Heart left ventricle (tissue), 16 donors: ENCODE measurements at regions of chr9 and their contacts with region 1.

Region 1: GRCh38 chr9:35603987-35604577 is 980 bp upstream of the TESK1 start:
- DNase-seq: peak; percentile 100
- ATAC-seq: peak; percentile 95 to 97 (median 96)
- H3K4me3 ChIP-seq: peak overlapping the region; percentile 43 to 96 (median 78)
- H3K27ac ChIP-seq: peak overlapping the region; percentile 62 to 99 (median 93)
- H3K4me1 ChIP-seq: peaks cover 6 to 33% (median 25%) of the 10 kb centered on the region in 12 donors
- H3K27me3 ChIP-seq: no peaks in the 10 kb centered on the region
- CTCF ChIP-seq: peak; percentile 90 to 99 (median 94)
- POLR2A ChIP-seq: peak in 1 of 2 donors; percentile 72

Region 2: DNA sequence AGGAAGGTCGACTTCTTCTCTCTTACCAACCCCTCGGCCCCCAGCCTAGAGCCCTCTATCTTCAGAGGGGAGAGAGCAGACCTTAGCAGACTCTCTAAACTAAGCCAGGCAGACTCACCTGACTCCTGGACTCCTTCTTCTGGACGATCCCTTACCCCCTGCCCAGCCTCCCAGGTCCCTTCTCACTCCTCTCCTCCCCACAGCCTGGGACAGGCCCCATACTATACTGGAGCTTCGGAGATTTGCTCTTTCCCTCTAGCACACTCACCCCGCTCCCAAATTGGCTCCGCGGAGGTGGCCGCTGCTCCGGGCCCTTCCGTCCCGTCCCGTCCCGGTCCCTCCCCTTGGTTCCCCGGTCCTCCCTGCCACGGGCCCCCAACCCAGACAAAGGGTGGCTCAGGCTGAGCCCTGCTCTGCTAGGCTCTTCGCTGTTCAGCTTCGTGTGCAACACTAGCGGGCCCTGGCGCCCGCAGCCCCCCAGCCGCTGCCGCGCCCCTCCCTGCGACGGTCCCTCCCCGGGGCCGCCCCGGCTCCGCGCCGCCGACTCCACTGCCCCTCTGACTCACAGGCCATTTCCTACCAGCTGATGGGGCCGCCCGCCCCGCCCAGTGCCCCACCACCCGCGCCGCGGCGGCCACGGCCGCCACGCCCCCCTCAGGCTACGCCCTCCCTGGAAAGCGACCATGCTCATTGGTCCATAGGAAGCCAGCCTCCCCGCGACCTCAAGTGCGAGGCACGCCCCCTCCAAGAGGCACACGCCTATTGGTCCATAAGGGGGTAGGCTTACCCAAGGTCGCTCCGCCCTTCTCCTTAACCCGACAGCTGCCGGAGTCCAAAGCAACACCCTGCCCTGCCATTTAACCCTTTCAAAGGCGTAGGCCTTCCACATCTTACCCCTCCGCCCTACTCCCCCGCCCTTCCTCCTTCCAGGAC is 492.8 kb before region 1 on chr9:
- intact Hi-C with region 1: loop called in 2 of 10 experiments (anchors 5 kb)
- DNase-seq: peak; percentile 98 to 99 (median 99)
- ATAC-seq: peak; percentile 75 to 87 (median 80)
- H3K4me3 ChIP-seq: peak overlapping the region; percentile 62 to 96 (median 88)
- H3K27ac ChIP-seq: peak overlapping the region; percentile 62 to 98 (median 92)
- H3K4me1 ChIP-seq: peaks cover 3 to 56% (median 46%) of the 10 kb centered on the region in 12 donors
- H3K27me3 ChIP-seq: no peaks in the 10 kb centered on the region
- CTCF ChIP-seq: no peak
- POLR2A ChIP-seq: peak; percentile 39 to 87

Region 3: DNA sequence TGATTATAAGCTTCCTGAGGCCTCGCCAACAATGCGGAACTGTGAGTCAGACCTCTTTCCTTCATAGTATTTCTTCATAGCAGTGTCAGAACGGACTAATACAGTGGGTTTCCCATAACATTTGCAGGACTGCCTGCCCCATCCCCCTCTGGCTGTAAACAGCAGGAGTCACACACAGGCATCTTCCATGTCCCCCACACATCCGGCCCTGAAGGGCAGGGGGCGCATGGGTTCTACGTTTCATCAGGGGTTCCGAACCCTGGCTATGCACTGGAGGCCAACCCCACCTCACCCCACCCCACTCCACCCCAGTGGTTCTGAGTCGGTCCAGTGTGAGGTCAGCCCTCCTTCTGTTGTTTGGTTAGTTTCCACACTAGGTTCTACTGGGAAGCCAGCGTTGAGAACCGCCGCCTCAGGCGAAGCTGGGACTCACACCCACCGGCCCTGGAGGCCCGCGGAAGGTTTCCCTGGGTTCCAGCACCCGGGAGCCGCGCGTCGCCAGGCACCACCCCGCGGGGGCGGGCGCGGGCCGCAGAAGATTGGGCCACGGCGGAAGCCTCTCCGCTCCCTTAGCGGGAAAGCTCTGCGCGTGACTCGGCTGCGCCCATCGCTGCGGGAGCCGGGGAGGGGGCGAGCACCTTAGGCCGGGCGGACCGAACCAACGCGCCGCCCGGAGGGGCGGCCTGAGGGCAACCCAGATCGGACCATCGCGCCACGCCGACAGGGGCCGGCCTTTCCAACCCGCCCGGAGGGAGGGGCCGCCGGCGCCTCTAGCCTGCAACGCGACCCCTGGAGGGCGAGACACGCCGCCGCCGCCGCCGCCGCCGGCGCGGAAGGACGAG is 114.5 kb before region 1 on chr9 and contains the start of gene RUSC2:
- intact Hi-C with region 1: loop called in 2 of 10 experiments (anchors 2 to 5 kb)
- DNase-seq: peak; percentile 87 to 92 (median 91)
- ATAC-seq: peak; percentile 78 to 90 (median 87)
- H3K4me3 ChIP-seq: peak within 1 kb of the TSS; percentile 53 to 97 (median 86)
- H3K27ac ChIP-seq: peak within 1 kb of the TSS; percentile 87 to 98 (median 96)
- H3K4me1 ChIP-seq: peaks cover 5 to 40% (median 31%) of the 10 kb centered on the region in 12 donors
- H3K27me3 ChIP-seq: no peaks in the 10 kb centered on the region
- CTCF ChIP-seq: peak; percentile 17 to 64 (median 46)
- POLR2A ChIP-seq: peak in 1 of 2 donors; percentile 79
- total RNA-seq, gene RUSC2: 23.0 to 56.1 (median 30.5) TPM

Region 4: DNA sequence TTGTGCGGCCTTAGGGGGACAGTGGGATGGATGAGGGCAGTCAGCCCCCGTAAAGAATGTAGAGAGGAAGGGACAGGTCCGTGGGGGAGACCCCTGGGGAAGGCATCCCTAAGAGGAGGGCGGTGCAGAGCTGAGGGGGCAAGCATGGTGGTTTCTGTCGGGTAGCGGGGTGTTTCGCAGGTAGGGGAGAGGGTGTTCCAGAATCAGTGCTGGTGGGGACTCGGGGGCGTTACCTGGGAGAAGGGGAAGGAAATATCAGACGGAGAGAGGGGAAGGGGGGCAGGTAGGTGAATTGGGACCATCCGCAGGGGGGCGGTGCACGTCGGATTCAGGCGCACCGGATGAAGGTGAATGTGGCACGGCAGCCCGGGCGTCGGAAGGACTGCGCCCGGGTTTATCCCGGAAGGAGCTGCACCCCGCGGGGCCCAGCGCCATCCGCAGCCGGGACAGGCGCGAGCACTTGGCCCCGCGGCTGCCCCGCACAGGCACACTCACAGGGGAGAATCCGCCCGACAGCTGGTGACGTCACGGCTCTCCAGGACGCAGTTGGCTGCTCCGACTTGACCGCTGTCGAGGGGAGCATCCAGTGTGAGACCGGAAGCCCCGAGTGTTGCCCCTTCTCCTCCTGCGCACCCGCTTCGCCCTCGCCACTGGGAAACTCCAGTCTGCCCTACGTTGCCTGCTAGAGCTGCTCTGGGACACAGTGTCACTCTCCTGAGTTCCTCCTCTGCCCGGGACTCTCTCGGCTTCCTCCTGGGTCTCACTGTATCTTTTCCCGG is 12.8 kb after region 1 on chr9:
- intact Hi-C with region 1: no loop called
- DNase-seq: peak; percentile 72 to 87 (median 78)
- ATAC-seq: peak; percentile 50 to 78 (median 64)
- H3K4me3 ChIP-seq: peak overlapping the region; percentile 25 to 62 (median 45)
- H3K27ac ChIP-seq: peak overlapping the region in 1 of 12 donors; percentile 54
- H3K4me1 ChIP-seq: peaks cover 0 to 37% (median 4%) of the 10 kb centered on the region in 12 donors
- H3K27me3 ChIP-seq: peaks cover 0 to 18% (median 0%) of the 10 kb centered on the region in 9 donors
- CTCF ChIP-seq: peak in 1 of 12 donors; percentile 15
- POLR2A ChIP-seq: no peak

Region 5: DNA sequence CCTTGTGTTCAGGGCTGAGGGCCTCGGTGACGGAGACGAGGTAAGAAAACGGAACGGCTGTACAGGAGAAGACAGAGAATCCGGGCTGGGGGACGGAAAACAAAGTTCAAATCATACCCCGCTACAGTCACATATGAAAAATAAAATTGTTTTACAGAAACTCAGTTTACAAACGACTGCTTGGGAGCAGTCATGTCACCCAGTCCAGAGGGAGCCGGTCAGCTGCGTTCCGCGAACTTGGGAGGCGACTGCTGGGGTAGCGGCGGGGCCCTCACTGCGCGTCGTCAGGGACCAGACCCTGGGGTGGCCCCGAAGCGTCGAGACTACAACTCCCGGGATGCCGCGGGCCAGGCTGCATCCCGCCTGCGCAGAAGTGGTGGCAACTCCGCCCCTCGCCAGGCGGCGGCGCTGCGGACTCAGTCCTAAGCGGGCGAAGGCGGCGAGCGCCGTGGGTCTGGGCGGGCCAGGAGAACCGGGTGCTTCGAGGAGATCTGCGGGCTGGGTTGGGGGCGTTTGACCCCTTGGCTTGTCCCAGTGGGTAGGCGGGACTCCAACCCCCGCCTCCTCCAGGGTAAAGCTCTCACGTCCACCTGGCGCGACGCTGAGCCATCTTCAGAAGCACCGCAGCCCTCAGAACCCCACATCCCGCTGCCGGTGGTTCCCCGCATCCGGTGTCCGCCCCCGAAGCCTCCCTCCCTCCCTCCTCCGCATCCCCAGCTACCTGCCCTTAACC is 42.6 kb after region 1 on chr9:
- intact Hi-C with region 1: loop called in 5 of 10 experiments (anchors 1 to 10 kb)
- DNase-seq: peak; percentile 93 to 97 (median 93)
- ATAC-seq: peak; percentile 83 to 97 (median 96)
- H3K4me3 ChIP-seq: peak overlapping the region; percentile 41 to 77 (median 64)
- H3K27ac ChIP-seq: peak overlapping the region; percentile 54 to 89 (median 81)
- H3K4me1 ChIP-seq: peaks cover 0 to 63% (median 9%) of the 10 kb centered on the region in 12 donors
- H3K27me3 ChIP-seq: no peaks in the 10 kb centered on the region
- CTCF ChIP-seq: peak; percentile 92 to 99 (median 96)
- POLR2A ChIP-seq: peak in 1 of 2 donors; percentile 85

Region 6: DNA sequence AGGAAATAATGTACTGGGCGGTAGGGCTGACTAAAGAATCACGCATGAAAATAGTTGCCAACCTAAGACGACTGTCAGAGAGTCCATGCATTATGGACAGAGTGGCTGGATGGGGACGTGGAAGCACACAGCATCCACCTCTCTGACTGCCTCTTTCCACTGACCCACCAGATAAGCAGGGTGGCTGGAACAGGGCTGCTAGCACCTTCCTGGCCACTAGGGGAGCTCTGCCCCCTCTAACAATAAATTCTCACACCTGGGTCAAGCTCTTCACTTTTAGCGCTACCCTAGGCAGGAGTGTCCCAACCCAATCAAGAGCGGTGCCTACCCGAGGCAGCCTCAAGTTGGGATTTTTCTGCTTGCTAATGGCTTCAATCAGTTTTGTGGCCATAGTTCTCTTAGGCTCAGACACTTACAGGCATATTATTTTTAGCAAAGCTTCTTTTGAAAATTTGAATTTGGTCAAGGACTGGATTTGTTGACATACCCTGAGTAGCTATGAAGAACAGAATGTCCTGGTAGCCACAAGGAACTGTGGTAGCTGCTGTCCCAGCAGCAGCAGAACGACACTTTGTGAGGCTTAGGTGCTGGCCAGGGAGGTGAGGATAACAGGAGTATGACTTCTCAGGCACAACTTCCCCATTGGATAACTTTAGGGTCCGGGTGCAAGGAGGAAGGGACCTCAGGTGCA is 92.6 kb after region 1 on chr9:
- intact Hi-C with region 1: loop called in 1 of 10 experiments (anchors 10 kb)
- DNase-seq: peak in 4 of 5 donors; percentile 44 to 59 (median 54)
- ATAC-seq: peak; percentile 49 to 75 (median 73)
- H3K4me3 ChIP-seq: no peak overlapping the region
- H3K27ac ChIP-seq: peak overlapping the region in 4 of 12 donors; percentile 14 to 98 (median 24)
- H3K4me1 ChIP-seq: peaks cover 0 to 13% (median 5%) of the 10 kb centered on the region in 12 donors
- H3K27me3 ChIP-seq: no peaks in the 10 kb centered on the region
- CTCF ChIP-seq: peak; percentile 82 to 94 (median 88)
- POLR2A ChIP-seq: no peak